PC-3 (cell line): ENCODE measurements at regions of chr22 and their contacts with region 1.

Region 1: DNA sequence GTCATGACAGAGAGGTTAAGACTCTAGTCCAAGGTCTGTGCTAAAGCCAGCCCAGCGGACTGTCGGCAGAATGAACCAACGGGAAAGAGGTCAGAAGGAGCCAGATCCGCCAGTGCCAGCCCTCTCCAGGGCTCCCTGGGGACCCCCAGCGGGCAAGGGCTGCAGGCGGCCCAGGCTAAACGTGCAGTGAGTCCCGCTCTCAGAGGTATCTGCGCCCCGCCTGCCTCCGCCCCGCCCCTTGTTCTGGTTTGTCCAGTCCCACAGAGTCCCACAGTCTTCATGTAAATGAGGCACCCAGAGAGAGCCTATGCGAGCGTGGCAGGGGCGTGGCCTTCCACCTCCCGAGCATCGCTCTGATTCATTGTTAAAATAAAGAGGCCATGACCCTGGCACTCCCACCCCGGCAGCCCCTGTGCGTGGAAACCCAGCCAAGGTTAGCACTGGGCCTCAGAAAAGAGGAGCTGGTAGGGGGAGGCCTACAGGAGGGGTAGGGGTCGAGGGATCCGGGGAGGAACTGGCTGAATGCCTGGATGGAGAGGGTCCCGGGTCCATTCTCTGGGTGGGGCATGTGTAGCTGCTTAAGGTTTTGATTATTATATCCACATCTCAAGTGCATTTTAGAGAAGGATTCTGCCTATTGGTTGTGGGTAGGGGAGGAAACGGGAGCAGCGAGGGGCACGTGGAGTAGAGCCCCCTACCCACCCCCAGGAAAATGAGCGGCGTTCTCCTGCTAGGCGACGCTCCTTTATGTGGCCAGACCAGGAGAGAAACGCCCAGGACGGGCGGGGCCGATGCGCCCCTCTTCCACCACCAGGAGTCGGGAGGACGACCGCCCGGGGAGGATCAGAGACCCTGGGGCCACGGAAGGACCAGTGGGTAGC is at the start of gene TRIOBP:
- DNase-seq: peak; percentile 93
- ATAC-seq: peak; percentile 99
- H3K4me3 ChIP-seq: peak within 1 kb of the TSS; percentile 13; the same call in 1 of the 2 replicates
- H3K27ac ChIP-seq: 0 out of 2 replicates have a peak within 1 kb of the TSS, but pooled peaks have one; percentile 17
- H3K4me1 ChIP-seq: peaks cover 16% of the 10 kb centered on the region
- H3K27me3 ChIP-seq: no peaks in the 10 kb centered on the region
- CTCF ChIP-seq: peak; percentile 50; the same call in 1 of the 2 replicates
- total RNA-seq, gene TRIOBP: 64.5 and 74.8 TPM in 2 replicates

Region 2: GRCh38 chr22:37616201-37617083 is 80.5 kb before region 1 on chr22:
- CTCF ChIA-PET with region 1: no interaction called
- POLR2A ChIA-PET with region 1: no interaction called
- intact Hi-C with region 1: no loop called
- DNase-seq: no peak
- ATAC-seq: no peak
- H3K4me3 ChIP-seq: no peak overlapping the region
- H3K27ac ChIP-seq: no peak overlapping the region
- H3K4me1 ChIP-seq: no peaks in the 10 kb centered on the region
- H3K27me3 ChIP-seq: no peaks in the 10 kb centered on the region
- CTCF ChIP-seq: no peak

Region 3: GRCh38 chr22:37631448-37632173 is 65.3 kb before region 1 on chr22:
- CTCF ChIA-PET with region 1: no interaction called
- POLR2A ChIA-PET with region 1: interaction called, 19 read pairs
- intact Hi-C with region 1: no loop called
- DNase-seq: no peak
- ATAC-seq: no peak
- H3K4me3 ChIP-seq: no peak overlapping the region
- H3K27ac ChIP-seq: no peak overlapping the region
- H3K4me1 ChIP-seq: no peaks in the 10 kb centered on the region
- H3K27me3 ChIP-seq: no peaks in the 10 kb centered on the region
- CTCF ChIP-seq: no peak

Region 4: DNA sequence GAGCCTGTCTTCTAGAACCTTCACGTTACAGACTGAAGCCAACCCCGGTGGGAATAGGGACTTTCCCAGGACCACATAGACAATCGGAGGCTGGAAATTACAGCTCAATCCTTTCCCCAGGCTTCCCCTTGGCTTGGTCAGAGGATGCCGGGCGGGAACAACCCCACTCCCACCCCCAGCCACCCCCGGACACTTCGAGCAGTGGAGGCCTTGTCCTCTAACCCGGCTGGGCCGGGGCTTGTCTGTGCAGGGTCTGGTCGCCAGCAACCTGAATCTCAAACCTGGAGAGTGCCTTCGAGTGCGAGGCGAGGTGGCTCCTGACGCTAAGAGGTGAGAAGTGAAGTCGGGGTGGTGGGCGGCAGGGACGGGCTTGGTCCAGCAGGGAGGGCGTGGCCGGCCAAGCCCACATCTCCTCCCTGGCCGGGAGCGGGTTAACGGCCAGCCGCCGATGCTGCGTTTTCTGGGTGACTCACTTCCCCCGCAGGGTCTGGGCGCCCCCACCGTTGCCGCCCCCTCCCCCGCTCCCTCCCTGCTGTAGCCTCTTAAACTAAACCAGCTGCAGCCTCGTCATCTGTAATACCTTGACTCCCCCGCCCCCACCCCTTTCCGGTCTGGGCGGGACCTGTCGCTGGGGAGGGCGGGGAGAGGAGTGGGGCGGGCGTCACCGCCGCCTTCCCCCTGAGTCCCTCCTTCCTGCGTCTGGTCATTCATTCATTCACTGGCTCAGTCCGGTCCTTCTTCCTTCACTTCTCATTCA is 20.0 kb before region 1 on chr22:
- CTCF ChIA-PET with region 1: no interaction called
- POLR2A ChIA-PET with region 1: no interaction called
- intact Hi-C with region 1: no loop called
- DNase-seq: peak; percentile 93
- ATAC-seq: peak; percentile 25
- H3K4me3 ChIP-seq: peak overlapping the region; percentile 85
- H3K27ac ChIP-seq: peak overlapping the region; percentile 93
- H3K4me1 ChIP-seq: peaks cover 15% of the 10 kb centered on the region
- H3K27me3 ChIP-seq: no peaks in the 10 kb centered on the region
- CTCF ChIP-seq: no peak

Region 5: GRCh38 chr22:37745548-37746365 is 48.9 kb after region 1 on chr22:
- CTCF ChIA-PET with region 1: no interaction called
- POLR2A ChIA-PET with region 1: no interaction called
- intact Hi-C with region 1: loop called (anchors 10 kb)
- DNase-seq: peak; percentile 87
- ATAC-seq: peak; percentile 31
- H3K4me3 ChIP-seq: peak overlapping the region; percentile 88
- H3K27ac ChIP-seq: peak overlapping the region; percentile 92
- H3K4me1 ChIP-seq: peaks cover 69% of the 10 kb centered on the region
- H3K27me3 ChIP-seq: no peaks in the 10 kb centered on the region
- CTCF ChIP-seq: no peak